ENCODE measurements at regions of chr19 and their contacts with region 1.

Region 1: GRCh38 chr19:19531951-19532805 is 3.5 kb downstream of the YJEFN3 start:
- DNase-seq: no peak
- H3K4me3 ChIP-seq: no peak overlapping the region
- CTCF ChIP-seq: peak; percentile 98

Region 2: GRCh38 chr19:19515764-19516519 is 16.2 kb before region 1 on chr19 and contains the start of gene NDUFA13:
- CTCF ChIA-PET with region 1: interaction called, 22 read pairs
- POLR2A ChIA-PET with region 1: interaction called, 3 read pairs
- DNase-seq: peak; percentile 26
- H3K4me3 ChIP-seq: peak within 1 kb of the TSS; percentile 66
- CTCF ChIP-seq: no peak

Region 3: DNA sequence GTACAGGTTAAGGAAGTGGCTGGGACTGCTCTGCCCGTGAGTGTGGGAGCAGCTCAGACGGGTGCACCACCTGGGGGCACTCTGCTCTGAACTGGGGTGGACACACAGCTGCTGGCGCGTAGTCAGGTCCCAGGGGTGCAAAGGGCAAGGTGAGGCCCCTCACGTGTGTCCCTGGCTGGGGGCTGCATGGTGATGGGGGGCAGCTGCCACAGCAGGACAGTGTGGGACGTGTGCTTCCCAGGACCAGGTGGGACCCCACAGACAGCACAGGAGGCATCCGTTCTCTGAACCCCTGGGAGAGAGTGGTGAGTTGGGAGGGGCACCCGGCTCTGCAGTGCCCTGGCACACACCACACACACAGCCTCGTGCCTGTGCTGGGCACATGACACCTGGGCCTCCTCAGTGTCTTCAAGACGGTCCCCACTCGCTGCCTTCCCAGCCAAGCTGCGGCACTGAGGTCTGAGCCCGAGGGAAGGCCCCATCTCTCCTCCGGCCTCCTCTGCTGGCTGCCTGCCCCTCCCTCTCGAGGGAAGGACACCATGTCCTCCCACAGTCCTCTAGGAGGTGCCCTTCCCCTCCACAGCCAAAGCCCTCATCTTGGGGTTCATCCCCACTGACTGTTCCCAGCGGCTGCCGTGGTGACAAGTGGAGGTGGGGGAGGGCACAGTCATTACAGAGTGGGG is 30.6 kb after region 1 on chr19:
- CTCF ChIA-PET with region 1: interaction called, 11 read pairs
- POLR2A ChIA-PET with region 1: no interaction called
- DNase-seq: no peak
- H3K4me3 ChIP-seq: no peak overlapping the region
- CTCF ChIP-seq: no peak

Region 4: GRCh38 chr19:19627621-19628500 is 95.7 kb after region 1 on chr19 and contains the start of gene LPAR2:
- CTCF ChIA-PET with region 1: interaction called, 12 read pairs
- POLR2A ChIA-PET with region 1: no interaction called
- DNase-seq: no peak
- H3K4me3 ChIP-seq: peak within 1 kb of the TSS; percentile 41
- CTCF ChIP-seq: no peak

Region 5: DNA sequence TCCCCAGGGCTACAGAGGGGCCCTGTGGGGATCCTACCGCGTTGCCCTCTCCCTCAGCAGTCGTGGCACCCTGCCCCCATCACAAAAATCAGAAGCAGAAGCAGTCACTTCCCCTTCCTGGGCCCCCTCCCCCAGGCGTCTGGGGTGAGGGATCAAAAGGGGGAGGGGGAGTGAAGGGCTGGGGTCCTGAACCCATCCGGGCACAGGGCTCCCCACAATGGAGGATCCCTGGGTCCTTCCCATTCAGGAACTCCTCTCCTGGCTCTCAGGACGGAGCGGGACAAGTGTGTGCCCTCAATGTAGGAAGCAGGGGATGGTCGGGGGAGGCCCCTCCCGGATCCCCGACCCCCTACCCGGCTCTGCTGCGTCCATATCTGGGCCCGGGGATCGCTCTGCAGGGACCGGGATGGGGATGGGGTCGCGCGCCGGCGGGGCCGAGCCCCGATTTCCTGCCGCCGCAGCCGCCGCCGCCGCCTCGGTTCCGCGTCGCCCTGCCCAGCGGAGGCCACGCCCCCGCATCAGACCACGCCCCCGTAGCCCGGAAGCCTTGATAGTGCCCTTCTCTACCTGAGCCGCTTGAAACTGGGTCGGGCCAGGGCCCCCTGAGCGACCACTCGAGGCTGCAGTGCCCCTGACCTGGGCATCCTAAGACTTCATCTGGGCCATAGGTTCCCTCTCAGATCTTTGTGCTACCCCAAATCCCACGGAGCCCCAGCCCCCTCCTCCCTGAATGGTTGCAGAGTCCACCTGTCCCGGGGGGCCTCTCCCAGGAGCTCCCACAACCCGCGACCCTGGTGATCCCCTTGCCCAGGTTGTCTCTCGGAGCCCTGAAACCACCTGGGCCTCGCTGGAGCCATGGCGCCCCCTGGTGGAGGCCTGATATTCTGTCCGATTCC is 111.2 kb after region 1 on chr19 and contains the start of gene GMIP:
- CTCF ChIA-PET with region 1: interaction called, 279 read pairs
- POLR2A ChIA-PET with region 1: interaction called, 4 read pairs
- DNase-seq: no peak
- H3K4me3 ChIP-seq: peak within 1 kb of the TSS; percentile 88
- CTCF ChIP-seq: peak; percentile 79

Region 6: GRCh38 chr19:19663256-19664038 is 131.3 kb after region 1 on chr19 and contains the start of gene ATP13A1:
- CTCF ChIA-PET with region 1: interaction called, 18 read pairs
- POLR2A ChIA-PET with region 1: no interaction called
- DNase-seq: peak; percentile 78
- H3K4me3 ChIP-seq: peak within 1 kb of the TSS; percentile 99
- CTCF ChIP-seq: peak; percentile 17

Measured in AG04449 (cell line).